IMR-90 (cell line): ENCODE measurements at regions of chr12 and their contacts with region 1.

Region 1: GRCh38 chr12:65631621-65632111 is 192.6 kb upstream of the HMGA2 start:
- DNase-seq: peak; percentile 100
- ATAC-seq: peak; percentile 79
- H3K4me3 ChIP-seq: no peak overlapping the region
- H3K27ac ChIP-seq: peak overlapping the region; percentile 78
- H3K4me1 ChIP-seq: peaks cover 22% of the 10 kb centered on the region
- H3K27me3 ChIP-seq: no peaks in the 10 kb centered on the region
- CTCF ChIP-seq: no peak
- POLR2A ChIP-seq: peak; percentile 57
- RAD21 ChIP-seq: peak; percentile 32; the same call in 1 of the 2 replicates

Region 2: GRCh38 chr12:65615118-65615517 is 16.5 kb before region 1 on chr12:
- CTCF ChIA-PET with region 1: no interaction called
- POLR2A ChIA-PET with region 1: no interaction called
- dilution Hi-C with region 1: no loop called
- in situ Hi-C with region 1: no loop called
- intact Hi-C with region 1: loop called (anchors 2 kb)
- DNase-seq: peak; percentile 98
- ATAC-seq: peak; percentile 76
- H3K4me3 ChIP-seq: no peak overlapping the region
- H3K27ac ChIP-seq: no peak overlapping the region
- H3K4me1 ChIP-seq: peaks cover 20% of the 10 kb centered on the region
- H3K27me3 ChIP-seq: no peaks in the 10 kb centered on the region
- CTCF ChIP-seq: no peak
- POLR2A ChIP-seq: no peak
- RAD21 ChIP-seq: no peak

Region 3: DNA sequence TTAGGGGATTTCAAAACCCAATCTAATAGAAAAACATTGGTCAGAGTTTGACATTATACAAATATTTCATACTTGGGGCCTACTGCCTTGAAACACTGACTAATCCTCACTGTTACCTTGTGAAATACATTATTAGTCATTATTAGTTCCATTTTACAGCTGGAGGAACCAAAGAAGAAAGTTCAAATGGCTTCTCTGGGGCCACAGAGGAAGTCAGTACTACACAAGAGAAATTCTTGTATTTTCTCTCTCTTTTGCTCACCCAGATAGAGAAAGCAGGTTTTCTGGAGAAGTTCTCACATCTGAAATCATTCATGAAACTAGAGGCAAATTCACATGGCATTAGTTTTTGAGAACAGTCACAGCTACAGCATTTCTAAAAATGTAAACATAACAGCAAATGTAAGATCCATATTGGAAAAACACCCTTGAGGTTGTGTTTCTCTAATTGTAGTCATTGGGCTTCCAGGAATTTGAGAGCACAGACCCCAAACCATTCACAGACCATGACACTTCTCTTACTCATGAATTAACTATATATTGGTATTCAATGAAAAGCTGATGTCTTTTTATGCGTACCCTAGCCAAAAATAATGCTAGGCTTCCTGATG is 415.9 kb after region 1 on chr12:
- CTCF ChIA-PET with region 1: no interaction called
- POLR2A ChIA-PET with region 1: no interaction called
- dilution Hi-C with region 1: no loop called
- in situ Hi-C with region 1: no loop called
- intact Hi-C with region 1: no loop called
- DNase-seq: peak; percentile 67
- ATAC-seq: peak; percentile 44
- H3K4me3 ChIP-seq: no peak overlapping the region
- H3K27ac ChIP-seq: peak overlapping the region; percentile 14; the same call in 1 of the 2 replicates
- H3K4me1 ChIP-seq: peaks cover 14% of the 10 kb centered on the region
- H3K27me3 ChIP-seq: no peaks in the 10 kb centered on the region
- CTCF ChIP-seq: no peak
- POLR2A ChIP-seq: no peak
- RAD21 ChIP-seq: no peak